Activated naive CD4-positive, alpha-beta T cell treated with anti-CD3 and anti-CD28 coated beads for 36 hours (primary cell): ENCODE measurements at regions of chr17 and their contacts with region 1.

Region 1: DNA sequence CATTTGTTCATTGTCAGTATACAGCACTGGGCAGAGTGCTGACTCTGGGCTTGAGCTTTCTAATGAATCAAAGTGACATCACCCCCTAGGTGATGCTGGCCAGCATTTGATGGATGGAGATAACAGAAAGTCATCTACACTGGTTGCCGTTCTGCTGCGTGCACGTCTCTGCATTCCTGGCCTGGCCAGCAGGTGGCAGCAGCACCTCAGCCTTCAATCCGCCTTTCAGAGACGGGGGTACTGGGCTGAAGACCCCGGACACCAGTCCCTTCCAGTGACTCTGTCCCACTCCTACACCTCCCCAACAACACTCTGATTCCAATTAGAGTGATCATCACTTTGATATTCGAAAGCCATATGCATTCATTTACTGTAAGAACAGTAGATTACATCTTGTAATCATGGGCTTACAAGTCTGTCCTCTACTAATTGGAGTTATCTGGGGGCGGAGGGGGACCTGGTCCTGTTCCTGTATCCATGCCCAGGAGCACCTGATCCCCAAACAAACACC is 6.0 kb downstream of the CPSF4L start:
- DNase-seq: peak; percentile 68
- H3K4me3 Mint-ChIP-seq: no peak overlapping the region
- H3K27ac Mint-ChIP-seq: no peak overlapping the region
- H3K4me1 Mint-ChIP-seq: no peaks in the 10 kb centered on the region
- H3K27me3 Mint-ChIP-seq: peaks cover 2% of the 10 kb centered on the region

Region 2: DNA sequence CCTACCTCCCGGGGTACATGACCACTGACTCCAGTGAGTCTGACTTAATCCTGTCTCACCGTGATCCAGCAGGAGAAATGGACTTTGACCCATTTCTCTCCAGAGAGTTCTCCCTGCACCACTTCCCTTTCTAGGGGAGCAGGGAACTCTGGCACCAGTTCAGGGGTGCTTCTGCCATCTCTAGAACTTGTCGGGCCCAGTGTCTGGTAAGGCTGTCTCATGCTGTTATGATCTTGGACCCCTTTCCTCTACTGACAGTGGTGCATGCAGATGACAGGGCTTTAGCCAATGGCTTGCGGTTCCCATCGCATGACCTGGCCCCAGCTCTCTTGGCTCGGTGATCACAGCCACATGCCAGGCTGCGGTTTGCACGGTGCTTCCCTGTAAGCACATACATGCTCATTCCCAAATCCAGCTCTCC is 225.2 kb before region 1 on chr17:
- CTCF ChIA-PET with region 1: no interaction called
- intact Hi-C with region 1: no loop called
- DNase-seq: no peak
- H3K4me3 Mint-ChIP-seq: no peak overlapping the region
- H3K27ac Mint-ChIP-seq: no peak overlapping the region
- H3K4me1 Mint-ChIP-seq: no peaks in the 10 kb centered on the region
- H3K27me3 Mint-ChIP-seq: no peaks in the 10 kb centered on the region

Region 3: DNA sequence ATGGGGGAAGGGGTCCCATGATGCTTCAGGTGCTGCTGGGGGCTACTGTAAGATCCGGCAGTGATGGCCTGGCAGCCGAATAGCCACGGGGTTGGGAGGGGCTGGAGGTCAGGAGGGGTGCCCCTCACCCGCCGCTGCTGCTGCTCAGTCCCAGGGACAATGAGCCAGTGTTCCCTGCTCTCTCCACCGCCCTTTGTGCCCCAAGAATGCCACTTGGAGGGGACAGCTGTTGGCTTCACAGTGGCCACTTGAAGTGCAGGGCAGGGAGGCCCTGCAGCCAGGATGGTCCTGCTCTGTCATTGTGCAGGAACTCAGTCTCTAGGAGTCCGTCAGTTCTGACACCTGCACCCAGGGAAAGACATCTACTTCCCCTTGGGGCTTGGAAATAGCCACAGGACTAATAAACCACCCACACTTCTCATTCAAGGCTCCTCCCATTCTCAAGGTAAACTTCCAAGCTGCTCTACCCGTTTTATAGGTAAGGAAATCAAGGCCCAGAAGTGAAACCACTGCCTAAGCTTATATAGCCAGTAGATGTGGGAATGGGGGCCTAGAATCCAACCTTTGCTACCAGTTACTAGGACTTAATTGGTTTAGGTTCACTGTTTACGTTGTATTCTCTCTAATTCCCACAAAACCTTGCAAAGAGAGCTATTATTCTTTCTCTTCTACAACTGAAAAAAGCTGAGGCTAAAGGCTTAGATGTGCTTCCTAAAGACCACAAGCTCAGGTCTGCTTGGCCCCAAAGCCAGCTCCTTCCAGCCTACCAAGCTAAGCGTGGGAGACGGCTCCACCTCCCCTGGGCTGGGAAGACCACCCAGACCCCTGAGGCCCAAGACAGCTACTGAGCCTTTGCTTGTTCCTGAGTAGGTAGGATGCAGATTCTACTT is 12.2 kb after region 1 on chr17:
- CTCF ChIA-PET with region 1: interaction called, 12 read pairs
- intact Hi-C with region 1: no loop called
- DNase-seq: no peak
- H3K4me3 Mint-ChIP-seq: no peak overlapping the region
- H3K27ac Mint-ChIP-seq: no peak overlapping the region
- H3K4me1 Mint-ChIP-seq: no peaks in the 10 kb centered on the region
- H3K27me3 Mint-ChIP-seq: no peaks in the 10 kb centered on the region

Region 4: DNA sequence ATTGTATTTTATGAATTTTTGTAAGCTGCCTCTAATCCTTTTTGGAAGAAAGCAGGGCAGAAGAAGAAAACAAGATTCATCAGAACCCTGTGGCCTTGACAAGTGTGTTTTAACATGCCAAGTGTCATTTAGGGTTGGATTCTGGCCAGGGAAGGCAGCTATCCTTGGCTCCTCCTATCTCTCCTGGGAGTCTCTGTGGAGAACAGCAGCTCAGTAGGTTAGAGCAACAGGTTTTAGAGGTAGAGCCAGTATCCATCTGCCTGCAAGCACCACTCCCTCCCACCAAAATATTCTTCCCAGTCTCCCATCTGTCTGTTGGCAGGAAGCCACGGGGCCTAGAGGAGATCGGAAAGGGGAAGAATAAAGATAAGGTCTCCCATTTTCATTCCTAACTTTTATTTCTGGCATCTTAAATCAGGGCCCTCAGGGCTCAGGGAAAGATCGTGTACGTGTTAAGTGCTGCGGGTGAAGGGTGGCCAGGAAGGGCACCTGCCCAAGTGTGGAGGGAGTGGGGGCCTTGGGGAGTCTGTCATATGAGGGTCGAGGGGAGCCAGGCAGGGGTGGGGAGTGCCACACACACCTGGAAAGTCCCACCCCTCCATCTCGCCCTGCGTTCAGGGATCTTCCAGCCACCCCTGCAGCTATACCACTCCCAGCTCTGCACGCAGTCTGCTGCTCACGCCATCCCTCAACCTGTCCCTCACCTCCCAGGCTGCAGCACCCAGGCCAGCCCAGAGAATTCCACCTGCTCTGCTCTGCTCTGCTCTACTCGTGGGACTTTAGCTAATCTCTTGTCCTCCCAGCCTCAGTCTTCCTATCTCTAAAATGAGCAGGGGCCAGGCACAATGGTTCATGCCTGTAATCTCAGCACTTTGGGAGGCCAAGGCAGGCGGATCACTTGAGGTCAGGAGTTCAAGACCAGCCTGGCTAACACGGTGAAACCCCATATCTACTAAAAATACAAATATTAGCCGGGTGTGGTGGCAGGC is 23.0 kb after region 1 on chr17:
- CTCF ChIA-PET with region 1: interaction called, 13 read pairs
- intact Hi-C with region 1: no loop called
- DNase-seq: no peak
- H3K4me3 Mint-ChIP-seq: no peak overlapping the region
- H3K27ac Mint-ChIP-seq: no peak overlapping the region
- H3K4me1 Mint-ChIP-seq: no peaks in the 10 kb centered on the region
- H3K27me3 Mint-ChIP-seq: peaks cover 2% of the 10 kb centered on the region

Region 5: GRCh38 chr17:73311781-73312641 is 56.3 kb after region 1 on chr17 and contains the start of gene CDC42EP4:
- CTCF ChIA-PET with region 1: interaction called, 4 read pairs
- intact Hi-C with region 1: loop called (anchors 5 kb)
- DNase-seq: peak; percentile 91
- H3K4me3 Mint-ChIP-seq: peak within 1 kb of the TSS; percentile 80
- H3K27ac Mint-ChIP-seq: no peak within 1 kb of the TSS
- H3K4me1 Mint-ChIP-seq: peaks cover 10% of the 10 kb centered on the region
- H3K27me3 Mint-ChIP-seq: no peaks in the 10 kb centered on the region
- total RNA-seq, gene CDC42EP4: 1.7 to 2.1 TPM

Region 6: DNA sequence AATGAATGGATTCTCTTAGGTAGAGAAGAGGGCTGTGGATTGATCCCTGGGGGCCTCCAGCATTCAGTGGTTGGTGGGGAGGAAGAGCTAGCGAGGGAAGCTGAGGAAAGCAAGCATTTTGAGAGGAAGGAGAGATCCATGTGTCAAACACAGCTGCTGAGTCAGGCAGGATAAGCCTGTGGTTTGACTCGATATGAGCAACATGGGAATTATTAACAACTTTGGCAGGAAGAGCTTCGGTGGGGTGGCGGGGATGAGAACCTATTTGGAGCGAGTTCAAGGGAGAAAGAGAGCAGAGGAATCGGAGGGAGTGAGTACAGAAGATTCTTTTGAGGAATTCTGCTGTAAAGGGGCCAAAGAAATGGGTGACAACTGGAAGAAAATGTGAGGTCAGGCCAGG is 115.6 kb after region 1 on chr17:
- CTCF ChIA-PET with region 1: interaction called, 85 read pairs
- intact Hi-C with region 1: loop called (anchors 1 kb)
- DNase-seq: no peak
- H3K4me3 Mint-ChIP-seq: no peak overlapping the region
- H3K27ac Mint-ChIP-seq: no peak overlapping the region
- H3K4me1 Mint-ChIP-seq: no peaks in the 10 kb centered on the region
- H3K27me3 Mint-ChIP-seq: peaks cover 4% of the 10 kb centered on the region

Region 7: GRCh38 chr17:73510981-73511718 is 255.4 kb after region 1 on chr17:
- CTCF ChIA-PET with region 1: no interaction called
- intact Hi-C with region 1: no loop called
- DNase-seq: no peak
- H3K4me3 Mint-ChIP-seq: no peak overlapping the region
- H3K27ac Mint-ChIP-seq: no peak overlapping the region
- H3K4me1 Mint-ChIP-seq: no peaks in the 10 kb centered on the region
- H3K27me3 Mint-ChIP-seq: no peaks in the 10 kb centered on the region

Region 8: GRCh38 chr17:73757420-73757819 is 501.7 kb after region 1 on chr17:
- CTCF ChIA-PET with region 1: no interaction called
- intact Hi-C with region 1: no loop called
- DNase-seq: peak; percentile 14
- H3K4me3 Mint-ChIP-seq: no peak overlapping the region
- H3K27ac Mint-ChIP-seq: no peak overlapping the region
- H3K4me1 Mint-ChIP-seq: peaks cover 17% of the 10 kb centered on the region
- H3K27me3 Mint-ChIP-seq: no peaks in the 10 kb centered on the region